Lower leg skin (tissue), 4 donors: ENCODE measurements at regions of chr18 and their contacts with region 1.

Region 1: GRCh38 chr18:56756966-56757365 is 105.8 kb downstream of the WDR7 start:
- DNase-seq: peak in 1 of 2 donors; percentile 16
- H3K4me3 ChIP-seq: no peak overlapping the region
- CTCF ChIP-seq: no peak
- POLR2A ChIP-seq: no peak

Region 2: GRCh38 chr18:55664781-55665271 is 1092.1 kb before region 1 on chr18:
- intact Hi-C with region 1: no loop called
- DNase-seq: no peak
- H3K4me3 ChIP-seq: no peak overlapping the region
- CTCF ChIP-seq: no peak
- POLR2A ChIP-seq: no peak

Region 3: DNA sequence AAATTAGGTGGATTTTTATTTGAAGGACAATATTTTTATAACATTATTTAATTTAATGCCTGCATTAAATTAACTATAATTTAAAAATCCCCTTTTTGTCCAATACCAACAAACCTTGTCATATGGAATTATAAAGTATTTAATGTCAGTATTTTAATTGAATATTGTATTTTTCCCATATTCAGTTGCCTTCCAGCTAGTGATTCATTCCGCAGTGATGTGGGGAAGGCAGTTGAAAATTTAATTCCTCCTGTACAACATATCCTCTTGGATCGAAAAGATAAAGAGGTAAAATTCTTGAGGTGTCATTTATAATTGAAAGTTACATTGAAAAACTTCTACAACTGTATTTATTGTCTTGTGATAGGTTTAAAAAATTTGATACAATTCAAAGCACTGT is 65.4 kb before region 1 on chr18:
- intact Hi-C with region 1: loop called (anchors 5 kb)
- DNase-seq: no peak
- H3K4me3 ChIP-seq: no peak overlapping the region
- CTCF ChIP-seq: no peak
- POLR2A ChIP-seq: no peak

Region 4: DNA sequence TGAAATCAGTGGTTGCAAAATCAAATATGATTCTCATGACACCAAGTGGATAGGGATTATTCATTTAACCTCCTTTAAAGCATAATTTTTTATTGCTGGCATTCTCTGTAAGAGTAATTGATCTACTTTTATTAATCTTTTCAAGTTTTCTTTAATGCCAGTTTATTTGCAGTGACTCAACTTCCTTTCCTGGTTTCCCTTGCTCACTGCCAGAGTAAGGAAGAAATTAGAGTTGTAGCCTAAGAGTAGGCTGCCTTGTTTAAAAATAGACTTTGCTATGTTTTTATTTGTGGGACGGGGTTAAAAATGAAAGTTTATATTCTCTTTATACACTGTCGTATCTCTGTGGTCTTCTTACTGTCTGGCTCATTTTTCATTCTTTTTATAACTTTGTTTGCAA is 42.8 kb after region 1 on chr18:
- intact Hi-C with region 1: no loop called
- DNase-seq: no peak
- H3K4me3 ChIP-seq: no peak overlapping the region
- CTCF ChIP-seq: no peak
- POLR2A ChIP-seq: no peak

Region 5: GRCh38 chr18:56815926-56816325 is 59.0 kb after region 1 on chr18:
- intact Hi-C with region 1: no loop called
- DNase-seq: no peak
- H3K4me3 ChIP-seq: no peak overlapping the region
- CTCF ChIP-seq: no peak
- POLR2A ChIP-seq: no peak

Region 6: GRCh38 chr18:57561728-57562423 is 804.9 kb after region 1 on chr18:
- intact Hi-C with region 1: loop called (anchors 10 kb)
- DNase-seq: no peak
- H3K4me3 ChIP-seq: no peak overlapping the region
- CTCF ChIP-seq: peak in 1 of 3 donors; percentile 28
- POLR2A ChIP-seq: no peak